T-cell (primary cell): ENCODE measurements at regions of chr2 and their contacts with region 1.

Region 1: DNA sequence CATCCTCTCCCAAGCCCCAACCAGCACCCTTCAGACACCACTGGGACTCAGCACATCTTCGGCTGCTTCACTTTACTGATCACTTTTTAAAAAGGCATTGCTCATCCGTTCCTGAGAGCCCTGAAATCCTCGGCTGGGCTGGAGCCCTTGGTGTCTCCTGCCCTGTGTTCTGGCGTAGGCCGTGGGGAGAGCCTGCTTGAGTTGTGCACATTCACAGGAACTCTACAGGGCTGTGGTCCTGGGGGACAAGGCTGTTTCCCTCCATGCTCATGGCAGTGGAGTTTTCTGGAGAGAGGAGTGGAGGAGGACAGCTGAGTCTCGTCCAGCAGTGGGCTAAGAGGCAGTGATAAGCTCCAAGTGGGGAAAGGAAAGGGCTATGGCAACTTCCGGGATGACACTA is 15.9 kb downstream of the CENPA start:
- DNase-seq: no peak
- ATAC-seq: no peak
- H3K4me3 ChIP-seq: no peak overlapping the region
- H3K4me3 Mint-ChIP-seq: no peak overlapping the region
- H3K27ac ChIP-seq: no peak overlapping the region
- H3K27ac Mint-ChIP-seq: no peak overlapping the region
- H3K4me1 ChIP-seq: no peaks in the 10 kb centered on the region
- H3K4me1 Mint-ChIP-seq: no peaks in the 10 kb centered on the region
- H3K27me3 ChIP-seq: no peaks in the 10 kb centered on the region
- H3K27me3 Mint-ChIP-seq: no peaks in the 10 kb centered on the region

Region 2: GRCh38 chr2:25009954-25010353 is 1791.8 kb before region 1 on chr2:
- CTCF ChIA-PET with region 1: no interaction called
- POLR2A ChIA-PET with region 1: interaction called in 1 of 2 experiments, 10 read pairs
- DNase-seq: no peak
- ATAC-seq: no peak
- H3K4me3 ChIP-seq: no peak overlapping the region
- H3K4me3 Mint-ChIP-seq: no peak overlapping the region
- H3K27ac ChIP-seq: no peak overlapping the region
- H3K27ac Mint-ChIP-seq: no peak overlapping the region
- H3K4me1 ChIP-seq: no peaks in the 10 kb centered on the region
- H3K4me1 Mint-ChIP-seq: no peaks in the 10 kb centered on the region
- H3K27me3 ChIP-seq: peaks cover 0 to 5% of the 10 kb centered on the region in 2 experiments
- H3K27me3 Mint-ChIP-seq: no peaks in the 10 kb centered on the region